RWPE1 (cell line): ENCODE measurements at regions of chr20 and their contacts with region 1.

Region 1: DNA sequence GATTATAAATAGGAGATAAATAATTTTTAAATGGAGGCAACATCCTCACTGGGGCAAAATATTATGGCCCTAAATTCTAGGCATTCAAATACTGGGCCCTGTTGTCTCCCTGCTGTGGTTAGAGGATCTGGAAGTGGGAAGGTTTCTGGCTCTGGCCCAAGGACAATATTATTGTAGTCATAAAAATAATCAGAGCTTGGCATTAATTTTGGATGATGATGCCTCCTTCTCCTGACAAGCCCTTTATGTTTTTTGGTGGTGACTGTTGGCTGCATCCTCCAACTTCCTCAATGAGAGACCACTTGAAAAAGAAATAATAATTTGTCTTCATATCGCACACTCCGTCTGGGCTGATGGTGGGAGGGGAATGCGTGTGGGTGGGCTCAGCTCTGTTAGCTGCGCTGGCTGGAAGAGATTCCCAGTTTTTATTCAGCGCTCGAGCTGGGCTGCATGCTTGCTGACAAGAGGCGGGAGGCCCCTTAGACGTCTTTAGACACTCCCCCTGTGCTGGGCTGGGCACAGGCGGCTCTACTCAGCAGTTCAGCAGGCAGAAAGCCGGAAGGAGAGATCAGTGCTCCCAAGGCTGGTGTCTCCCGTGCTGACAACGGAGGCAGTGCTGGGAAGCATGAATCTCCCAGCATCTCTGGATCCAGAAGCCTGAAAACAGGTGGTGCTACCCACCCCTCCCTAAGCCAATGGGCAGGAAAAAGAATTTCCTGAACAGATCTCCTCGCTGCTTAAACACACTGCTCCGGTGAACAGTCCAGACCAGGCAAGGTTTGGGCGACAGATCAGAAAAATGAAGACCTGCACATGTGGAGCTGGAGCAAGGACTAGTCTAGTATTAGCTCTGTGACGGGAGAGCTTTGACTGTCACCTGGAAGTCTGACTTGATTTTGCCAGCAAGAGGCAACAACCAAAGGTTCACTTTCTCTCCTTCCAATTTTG is 97.7 kb downstream of the SYCP2 start:
- DNase-seq: peak; percentile 67
- H3K27ac ChIP-seq: peak overlapping the region; percentile 90
- CTCF ChIP-seq: no peak

Region 2: DNA sequence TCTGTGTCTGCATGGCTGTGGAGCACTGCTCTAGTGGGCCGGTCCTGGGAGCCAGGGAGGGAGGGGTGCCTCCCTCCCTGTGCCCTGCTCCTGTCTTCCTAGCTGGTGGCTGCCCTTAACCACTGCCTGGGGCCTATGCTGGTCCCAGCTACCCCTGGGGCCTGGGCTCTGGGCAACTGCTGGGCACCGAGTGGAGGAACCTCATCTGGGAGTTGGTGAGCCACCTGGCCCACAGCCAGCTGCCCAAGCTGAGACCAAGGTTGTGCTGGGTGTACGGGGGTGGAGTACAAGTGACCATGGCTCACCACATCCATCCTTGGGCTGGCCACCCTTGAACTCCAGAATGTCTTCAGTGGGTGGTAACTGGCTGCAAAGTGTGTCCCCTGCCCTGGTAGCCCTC is 74.6 kb before region 1 on chr20:
- CTCF ChIA-PET with region 1: no interaction called
- POLR2A ChIA-PET with region 1: no interaction called
- DNase-seq: no peak
- H3K27ac ChIP-seq: no peak overlapping the region
- CTCF ChIP-seq: no peak

Region 3: GRCh38 chr20:59782986-59783640 is 52.6 kb before region 1 on chr20:
- CTCF ChIA-PET with region 1: interaction called, 10 read pairs
- POLR2A ChIA-PET with region 1: no interaction called
- DNase-seq: peak; percentile 90
- H3K27ac ChIP-seq: no peak overlapping the region
- CTCF ChIP-seq: peak; percentile 99

Region 4: DNA sequence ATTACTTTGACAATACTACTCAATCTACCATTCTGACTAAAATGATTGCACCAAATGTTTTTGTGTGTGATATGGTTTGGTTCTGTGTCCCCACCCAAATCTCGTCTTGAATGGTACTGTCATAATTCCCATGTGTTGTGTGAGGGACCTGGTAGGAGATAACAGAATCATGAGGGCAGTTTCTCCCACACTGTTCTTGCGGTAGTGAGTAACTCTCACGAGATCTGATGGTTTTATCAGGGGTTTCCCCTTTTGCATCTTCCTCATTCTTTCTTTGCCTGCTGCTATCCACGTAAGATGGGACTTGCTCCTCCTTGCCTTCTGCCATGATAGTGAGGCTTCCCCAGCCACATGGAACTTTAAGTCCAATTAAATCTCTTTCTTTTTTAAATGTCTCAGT is 76.9 kb after region 1 on chr20:
- CTCF ChIA-PET with region 1: no interaction called
- POLR2A ChIA-PET with region 1: no interaction called
- DNase-seq: no peak
- H3K27ac ChIP-seq: no peak overlapping the region
- CTCF ChIP-seq: no peak

Region 5: GRCh38 chr20:59966428-59966827 is 130.7 kb after region 1 on chr20:
- CTCF ChIA-PET with region 1: no interaction called
- POLR2A ChIA-PET with region 1: no interaction called
- DNase-seq: no peak
- H3K27ac ChIP-seq: no peak overlapping the region
- CTCF ChIP-seq: no peak

Region 6: GRCh38 chr20:60095456-60095855 is 259.7 kb after region 1 on chr20:
- CTCF ChIA-PET with region 1: no interaction called
- POLR2A ChIA-PET with region 1: no interaction called
- DNase-seq: no peak
- H3K27ac ChIP-seq: no peak overlapping the region
- CTCF ChIP-seq: no peak